ENCODE measurements at regions of chr2 and their contacts with region 1.

Region 1: DNA sequence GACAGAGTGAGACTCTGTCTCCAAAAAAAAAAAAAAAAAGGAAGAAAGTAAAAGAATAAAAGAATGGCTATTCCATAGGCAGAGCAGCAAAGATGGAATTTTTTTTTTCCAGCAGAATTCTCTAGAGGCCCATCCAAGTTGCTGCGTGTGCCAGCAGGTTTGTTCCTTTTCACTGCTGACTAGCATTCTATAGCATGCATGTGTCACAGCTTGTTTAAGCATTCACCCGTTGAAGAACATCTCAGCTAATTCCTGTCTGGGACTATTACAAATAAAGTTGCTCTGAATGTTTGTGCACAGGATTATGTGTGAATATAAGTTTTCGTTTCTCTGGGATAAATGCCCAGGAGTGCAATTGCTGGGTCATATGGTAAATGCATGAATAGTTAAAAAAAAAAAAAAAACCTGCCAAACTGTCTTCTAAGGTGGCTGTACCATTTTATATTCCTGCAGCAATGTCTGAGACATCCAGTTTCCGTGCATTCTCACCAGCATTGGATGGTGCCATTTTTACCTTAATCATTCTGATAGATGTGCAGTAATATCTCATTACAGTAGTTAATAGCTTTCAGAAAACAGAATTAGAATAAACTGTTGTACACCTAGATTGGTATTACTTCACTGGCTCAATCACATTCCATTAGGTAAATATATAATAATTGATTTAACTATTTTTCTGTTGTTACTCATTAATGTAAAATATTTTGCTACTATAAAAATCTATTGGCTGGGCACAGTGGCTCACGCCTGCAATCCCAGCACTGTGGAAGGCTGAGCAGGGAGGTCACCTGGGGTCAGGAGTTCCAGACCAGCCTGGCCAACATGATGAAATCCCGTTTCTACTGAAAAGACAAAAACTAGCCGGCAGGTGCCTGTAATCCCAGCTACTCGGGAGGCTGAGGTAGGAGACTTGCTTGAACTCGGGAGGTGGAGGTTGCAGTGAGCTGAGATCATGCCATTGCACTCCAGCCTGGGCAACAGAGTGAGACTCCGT is 47.5 kb upstream of the ASAP2 start:
- DNase-seq: no peak
- ATAC-seq: no peak
- H3K4me3 ChIP-seq: no peak overlapping the region
- H3K27ac ChIP-seq: no peak overlapping the region
- H3K4me1 ChIP-seq: peaks cover 3 to 5% of the 10 kb centered on the region in 2 donors
- H3K27me3 ChIP-seq: no peaks in the 10 kb centered on the region

Region 2: GRCh38 chr2:8821276-8822217 is 337.5 kb before region 1 on chr2:
- intact Hi-C with region 1: no loop called
- DNase-seq: peak in 1 of 2 donors; percentile 69
- ATAC-seq: peak; percentile 95
- H3K4me3 ChIP-seq: peak overlapping the region in 1 of 2 donors; percentile 64
- H3K27ac ChIP-seq: peak overlapping the region; percentile 54 to 86
- H3K4me1 ChIP-seq: no peaks in the 10 kb centered on the region
- H3K27me3 ChIP-seq: no peaks in the 10 kb centered on the region

Region 3: DNA sequence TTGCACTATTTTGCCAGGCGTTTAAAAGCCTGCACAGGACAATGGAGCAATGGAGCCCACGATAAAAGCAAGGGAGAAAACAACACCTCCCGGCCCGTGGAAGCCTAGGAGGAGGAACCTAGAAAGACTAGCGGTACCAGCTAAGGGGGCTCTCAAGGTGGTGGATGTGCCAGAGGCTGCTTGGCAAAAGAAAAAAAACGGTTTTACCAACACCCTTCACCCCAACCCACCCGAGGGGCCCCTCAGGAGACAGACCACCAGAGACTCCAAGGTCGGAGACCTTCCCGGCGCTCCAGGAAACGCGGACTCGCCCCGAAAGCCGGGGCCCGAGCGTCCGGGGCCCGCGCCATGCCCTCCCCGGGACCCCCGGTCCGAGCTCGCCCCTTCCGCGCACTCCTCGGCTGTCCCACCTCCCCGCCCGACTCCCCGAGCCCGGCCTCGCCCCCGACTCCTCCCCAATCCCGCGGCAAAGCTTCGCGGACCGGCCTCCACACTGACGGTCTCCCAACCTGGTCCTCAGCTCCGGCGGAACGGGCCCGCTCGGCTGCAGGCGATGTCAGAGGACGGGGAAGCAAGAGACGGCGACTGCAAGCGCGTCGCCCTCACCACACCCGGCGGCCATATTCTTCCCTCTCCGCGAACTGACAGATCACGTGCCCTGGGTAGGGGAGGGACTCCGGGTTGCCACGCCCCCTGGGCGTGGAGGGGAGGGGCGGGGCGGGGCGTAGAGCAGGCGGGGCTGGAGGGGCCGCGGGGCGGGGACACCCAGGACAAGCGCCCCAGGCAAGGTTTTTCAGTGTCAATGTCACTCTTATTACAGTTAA is 321.9 kb before region 1 on chr2 and contains the start of gene KIDINS220:
- intact Hi-C with region 1: no loop called
- DNase-seq: peak; percentile 87 to 95
- ATAC-seq: peak; percentile 97
- H3K4me3 ChIP-seq: peak within 1 kb of the TSS; percentile 50 to 88
- H3K27ac ChIP-seq: peak within 1 kb of the TSS in 1 of 2 donors; percentile 58
- H3K4me1 ChIP-seq: no peaks in the 10 kb centered on the region
- H3K27me3 ChIP-seq: no peaks in the 10 kb centered on the region
- total RNA-seq, gene KIDINS220: 67.9 to 81.6 TPM

Region 4: DNA sequence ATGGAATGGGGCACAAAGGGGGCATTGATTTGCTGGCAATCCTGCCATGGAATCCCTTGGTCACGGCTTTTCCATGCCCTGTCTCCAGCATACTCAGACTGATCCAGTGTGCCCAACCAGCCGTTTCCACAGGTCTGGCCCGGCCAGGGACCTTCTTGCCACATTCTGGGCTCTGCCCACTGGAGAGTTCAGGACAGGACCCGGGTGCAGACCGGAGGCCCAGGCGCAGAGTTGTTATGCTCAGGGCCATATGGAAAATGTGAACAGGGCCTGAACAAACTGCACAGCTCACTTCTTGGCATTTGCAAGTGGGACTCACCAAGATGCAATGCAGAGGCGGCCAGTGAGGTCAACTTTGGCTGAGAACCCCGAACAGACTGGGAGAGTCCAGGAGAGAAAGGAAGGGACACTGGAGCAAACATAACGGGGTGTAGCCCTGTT is 32.0 kb after region 1 on chr2:
- intact Hi-C with region 1: loop called in 1 of 2 experiments (anchors 5 kb)
- DNase-seq: peak; percentile 98
- ATAC-seq: peak; percentile 92
- H3K4me3 ChIP-seq: no peak overlapping the region
- H3K27ac ChIP-seq: peak overlapping the region; percentile 83 to 98
- H3K4me1 ChIP-seq: peaks cover 5 to 8% of the 10 kb centered on the region in 2 donors
- H3K27me3 ChIP-seq: no peaks in the 10 kb centered on the region

Region 5: GRCh38 chr2:9205963-9206948 is 47.2 kb after region 1 on chr2 and contains the start of gene ASAP2:
- intact Hi-C with region 1: no loop called
- DNase-seq: peak; percentile 77 to 91
- ATAC-seq: peak; percentile 90
- H3K4me3 ChIP-seq: peak within 1 kb of the TSS; percentile 87 to 95
- H3K27ac ChIP-seq: peak within 1 kb of the TSS; percentile 90 to 92
- H3K4me1 ChIP-seq: peaks cover 0 to 4% of the 10 kb centered on the region in 2 donors
- H3K27me3 ChIP-seq: no peaks in the 10 kb centered on the region
- total RNA-seq, gene ASAP2: 55.2 to 72.4 TPM